Activated T-helper 1 cell treated with anti-CD3 and anti-CD28 coated beads, Interleukin-12 subunit alpha, Interleukin-12 subunit beta, Interleukin-2, Interleukin-4 antibody, amounts not matched to agents 30 ng/mL and 10 ng/mL and 1 ng/mL, durations not matched to agents 14 hours and 24 hours and 36 hours (primary cell): ENCODE measurements at regions of chr2 and their contacts with region 1.

Region 1: GRCh38 chr2:203706403-203706802 is at the start of gene CD28:
- DNase-seq: peak; percentile 88
- H3K4me3 Mint-ChIP-seq: peak within 1 kb of the TSS; percentile 85
- H3K27ac Mint-ChIP-seq: peak within 1 kb of the TSS; percentile 100
- H3K4me1 Mint-ChIP-seq: peaks cover 53% of the 10 kb centered on the region
- H3K27me3 Mint-ChIP-seq: no peaks in the 10 kb centered on the region
- total RNA-seq, gene CD28: 132 and 133 TPM in 2 replicates

Region 2: DNA sequence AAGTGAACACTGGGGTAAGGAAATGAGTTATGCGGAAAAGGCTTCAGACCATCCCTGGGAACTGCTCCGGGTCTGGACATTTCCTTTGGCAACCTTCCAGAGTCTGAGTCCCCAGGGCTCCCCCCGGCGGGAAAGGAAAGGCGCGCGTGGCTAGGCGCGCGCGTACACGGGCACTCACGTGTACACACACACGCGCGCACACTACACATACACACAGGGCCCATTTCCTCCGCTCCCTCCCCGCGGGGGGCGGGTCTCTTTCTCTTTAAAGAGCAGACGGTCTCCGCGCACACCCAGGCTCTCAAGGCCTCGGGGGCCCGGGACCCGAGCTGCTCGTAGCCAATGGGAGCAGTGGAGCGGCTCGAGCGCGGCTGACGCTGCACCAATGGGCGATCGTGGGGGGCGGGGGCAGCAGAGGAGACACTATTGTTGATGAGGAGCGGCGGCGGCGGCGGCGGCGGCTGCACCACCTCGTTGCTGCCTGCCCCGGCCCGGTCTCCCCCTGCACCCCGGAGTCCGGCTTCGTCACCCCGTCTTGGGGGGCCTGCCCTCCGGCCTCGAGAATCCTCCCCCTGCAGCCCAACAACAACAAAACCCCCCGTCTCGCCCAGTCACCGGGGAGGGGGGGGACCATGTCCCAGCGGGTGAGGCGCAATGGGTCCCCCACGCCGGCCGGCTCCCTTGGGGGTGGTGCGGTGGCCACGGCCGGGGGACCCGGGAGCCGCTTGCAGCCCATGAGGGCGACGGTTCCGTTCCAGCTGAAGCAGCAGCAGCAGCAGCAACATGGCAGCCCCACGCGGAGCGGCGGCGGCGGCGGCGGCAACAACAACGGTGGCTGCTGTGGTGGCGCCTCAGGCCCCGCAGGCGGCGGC is 1071.6 kb before region 1 on chr2 and contains the start of gene FAM117B:
- intact Hi-C with region 1: loop called (anchors 10 kb)
- DNase-seq: peak; percentile 98
- H3K4me3 Mint-ChIP-seq: peak within 1 kb of the TSS; percentile 91
- H3K27ac Mint-ChIP-seq: peak within 1 kb of the TSS; percentile 89
- H3K4me1 Mint-ChIP-seq: peaks cover 45% of the 10 kb centered on the region
- H3K27me3 Mint-ChIP-seq: no peaks in the 10 kb centered on the region
- total RNA-seq, gene FAM117B: 9.3 and 9.5 TPM in 2 replicates

Region 3: DNA sequence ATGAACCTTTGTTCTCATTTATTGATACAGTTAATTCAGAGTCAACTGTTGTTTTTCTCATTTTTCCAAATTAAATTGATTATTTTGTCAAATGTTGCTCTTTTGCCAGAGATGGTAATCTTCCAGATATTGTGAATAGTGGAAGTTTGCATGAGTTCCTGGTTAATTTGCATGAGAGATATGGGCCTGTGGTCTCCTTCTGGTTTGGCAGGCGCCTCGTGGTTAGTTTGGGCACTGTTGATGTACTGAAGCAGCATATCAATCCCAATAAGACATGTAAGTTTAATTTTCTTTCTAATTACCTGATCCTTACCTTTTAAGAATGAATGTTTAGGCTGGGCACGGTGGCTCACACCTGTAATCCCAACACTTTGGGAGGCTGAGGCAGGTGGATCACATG is 459.8 kb before region 1 on chr2:
- intact Hi-C with region 1: no loop called
- DNase-seq: no peak
- H3K4me3 Mint-ChIP-seq: no peak overlapping the region
- H3K27ac Mint-ChIP-seq: no peak overlapping the region
- H3K4me1 Mint-ChIP-seq: peaks cover 7% of the 10 kb centered on the region
- H3K27me3 Mint-ChIP-seq: no peaks in the 10 kb centered on the region

Region 4: DNA sequence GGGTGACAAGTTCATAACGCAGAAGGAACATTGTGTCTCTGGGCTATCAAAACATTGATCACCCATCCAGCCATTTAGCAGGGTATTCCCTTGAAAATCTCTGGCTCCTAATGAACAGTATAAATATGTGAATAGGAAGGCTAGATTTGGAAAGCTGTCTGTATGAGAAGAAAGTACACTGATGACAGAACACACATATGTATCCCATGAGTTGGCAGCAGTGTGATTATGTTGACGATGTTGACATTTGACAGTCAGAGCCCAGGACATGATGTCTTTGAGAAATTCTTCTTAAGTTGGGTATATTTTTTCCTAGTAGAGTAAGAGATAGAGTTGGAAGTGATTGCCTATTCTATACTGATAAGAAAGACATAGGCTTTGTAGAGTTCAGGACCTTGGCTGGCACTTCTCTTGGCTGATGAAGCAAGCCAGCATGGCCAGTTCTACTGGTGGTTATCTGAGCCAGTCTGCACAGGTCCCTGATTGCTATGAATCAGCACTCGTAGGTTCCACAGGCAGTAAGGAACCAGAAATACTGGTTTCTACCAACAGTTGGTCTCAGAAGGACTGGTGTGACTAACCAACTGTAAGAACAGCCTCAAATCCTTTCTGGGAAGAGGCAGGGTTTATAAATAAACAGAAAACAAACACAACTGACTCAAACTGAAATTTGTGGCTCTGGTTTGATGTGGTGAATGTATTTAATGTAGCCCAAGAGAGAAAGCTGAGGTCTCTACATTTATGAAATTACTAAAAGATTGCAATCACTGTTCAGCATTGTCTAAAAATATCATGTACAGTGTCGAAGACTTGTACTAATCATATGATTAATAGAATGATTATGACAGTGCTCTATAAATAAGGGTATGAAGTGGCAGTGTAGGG is 127.4 kb before region 1 on chr2:
- intact Hi-C with region 1: loop called (anchors 1 kb)
- DNase-seq: peak; percentile 64
- H3K4me3 Mint-ChIP-seq: peak overlapping the region; percentile 38
- H3K27ac Mint-ChIP-seq: peak overlapping the region; percentile 46
- H3K4me1 Mint-ChIP-seq: peaks cover 49% of the 10 kb centered on the region
- H3K27me3 Mint-ChIP-seq: peaks cover 40% of the 10 kb centered on the region

Region 5: GRCh38 chr2:203673933-203674332 is 32.5 kb before region 1 on chr2:
- intact Hi-C with region 1: loop called (anchors 1 kb)
- DNase-seq: peak; percentile 49
- H3K4me3 Mint-ChIP-seq: peak overlapping the region; percentile 61
- H3K27ac Mint-ChIP-seq: peak overlapping the region; percentile 90
- H3K4me1 Mint-ChIP-seq: peaks cover 33% of the 10 kb centered on the region
- H3K27me3 Mint-ChIP-seq: no peaks in the 10 kb centered on the region

Region 6: DNA sequence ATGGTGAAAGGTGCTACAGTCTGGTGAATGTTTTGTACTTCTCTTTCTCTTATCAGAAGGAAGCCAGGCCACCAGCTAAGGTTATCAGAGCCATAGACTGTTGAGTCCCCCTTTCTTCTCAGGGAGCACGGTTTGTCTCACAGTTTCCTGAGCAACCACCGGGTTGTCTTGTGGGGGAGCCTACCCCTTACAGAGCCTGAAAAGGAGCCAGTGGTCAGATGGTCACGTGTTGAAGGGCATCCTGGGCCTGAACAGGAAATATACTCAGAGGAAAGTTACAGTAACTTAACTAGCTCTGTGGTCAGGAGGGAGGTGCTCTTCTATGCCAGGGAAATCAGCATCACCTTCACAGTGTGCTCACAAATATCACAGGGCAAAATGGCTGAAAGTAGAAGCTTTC is 11.7 kb after region 1 on chr2:
- intact Hi-C with region 1: loop called (anchors 1 kb)
- DNase-seq: peak; percentile 67
- H3K4me3 Mint-ChIP-seq: peak overlapping the region; percentile 73
- H3K27ac Mint-ChIP-seq: peak overlapping the region; percentile 96
- H3K4me1 Mint-ChIP-seq: peaks cover 96% of the 10 kb centered on the region
- H3K27me3 Mint-ChIP-seq: no peaks in the 10 kb centered on the region

Region 7: GRCh38 chr2:203763938-203764664 is 57.7 kb after region 1 on chr2:
- intact Hi-C with region 1: loop called (anchors 1 kb)
- DNase-seq: peak; percentile 20
- H3K4me3 Mint-ChIP-seq: peak overlapping the region; percentile 22
- H3K27ac Mint-ChIP-seq: peak overlapping the region; percentile 95
- H3K4me1 Mint-ChIP-seq: peaks cover 66% of the 10 kb centered on the region
- H3K27me3 Mint-ChIP-seq: no peaks in the 10 kb centered on the region

Region 8: GRCh38 chr2:203871371-203871983 is 165.1 kb after region 1 on chr2:
- intact Hi-C with region 1: loop called (anchors 1 kb)
- DNase-seq: peak; percentile 67
- H3K4me3 Mint-ChIP-seq: peak overlapping the region; percentile 95
- H3K27ac Mint-ChIP-seq: peak overlapping the region; percentile 99
- H3K4me1 Mint-ChIP-seq: peaks cover 82% of the 10 kb centered on the region
- H3K27me3 Mint-ChIP-seq: no peaks in the 10 kb centered on the region

Region 9: GRCh38 chr2:204479557-204479956 is 773.2 kb after region 1 on chr2:
- intact Hi-C with region 1: no loop called
- DNase-seq: no peak
- H3K4me3 Mint-ChIP-seq: no peak overlapping the region
- H3K27ac Mint-ChIP-seq: no peak overlapping the region
- H3K4me1 Mint-ChIP-seq: no peaks in the 10 kb centered on the region
- H3K27me3 Mint-ChIP-seq: peaks cover under 1% of the 10 kb centered on the region